ENCODE measurements at regions of chr11 and their contacts with region 1.

Region 1: DNA sequence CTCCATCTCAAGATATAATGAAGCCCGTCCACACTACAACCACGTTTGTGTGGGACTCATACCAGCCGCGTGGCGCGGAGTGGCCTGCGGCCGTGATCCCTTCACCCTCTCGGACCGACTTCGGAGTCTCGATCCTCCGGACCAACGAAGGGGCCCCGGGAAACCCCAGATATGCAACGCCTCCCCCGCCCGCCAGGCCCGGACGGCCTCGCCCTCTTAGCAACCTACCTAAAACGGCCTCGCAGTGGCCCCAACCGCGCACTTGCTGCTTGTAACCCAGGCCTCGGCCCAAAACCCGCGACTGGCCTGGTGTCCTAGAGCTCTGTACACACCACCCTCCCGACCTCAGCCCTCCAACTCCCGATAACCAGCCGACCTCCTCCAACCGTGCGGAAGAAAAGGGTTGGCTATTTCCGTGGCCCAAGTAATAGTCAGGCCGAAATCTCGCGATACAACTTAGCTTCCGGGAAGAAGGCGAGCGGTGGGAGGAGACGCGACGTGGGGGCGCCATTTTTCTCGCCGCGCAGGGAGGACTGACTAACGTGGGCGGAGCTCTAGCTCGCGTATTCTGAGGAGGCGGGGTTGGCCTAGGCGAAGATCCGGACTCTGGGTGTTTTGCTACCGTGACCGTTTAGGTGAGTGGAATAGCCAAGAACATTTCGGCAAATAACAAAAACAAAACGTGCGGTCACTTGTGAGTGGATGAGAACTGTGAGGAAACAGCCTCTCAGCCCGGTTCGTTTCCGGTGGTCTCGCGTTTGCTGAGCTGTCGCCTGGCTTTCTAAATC is at the starts of genes C11orf54 and TAF1D:
- DNase-seq: peak; percentile 96
- H3K4me3 Mint-ChIP-seq: peak within 1 kb of the TSS; percentile 99
- H3K27ac Mint-ChIP-seq: peak within 1 kb of the TSS; percentile 99
- H3K4me1 Mint-ChIP-seq: peaks cover 45% of the 10 kb centered on the region
- H3K27me3 Mint-ChIP-seq: no peaks in the 10 kb centered on the region
- total RNA-seq, gene C11orf54: 19.3 and 21.2 TPM in 2 replicates
- total RNA-seq, gene TAF1D: 344 TPM in 2 replicates

Region 2: DNA sequence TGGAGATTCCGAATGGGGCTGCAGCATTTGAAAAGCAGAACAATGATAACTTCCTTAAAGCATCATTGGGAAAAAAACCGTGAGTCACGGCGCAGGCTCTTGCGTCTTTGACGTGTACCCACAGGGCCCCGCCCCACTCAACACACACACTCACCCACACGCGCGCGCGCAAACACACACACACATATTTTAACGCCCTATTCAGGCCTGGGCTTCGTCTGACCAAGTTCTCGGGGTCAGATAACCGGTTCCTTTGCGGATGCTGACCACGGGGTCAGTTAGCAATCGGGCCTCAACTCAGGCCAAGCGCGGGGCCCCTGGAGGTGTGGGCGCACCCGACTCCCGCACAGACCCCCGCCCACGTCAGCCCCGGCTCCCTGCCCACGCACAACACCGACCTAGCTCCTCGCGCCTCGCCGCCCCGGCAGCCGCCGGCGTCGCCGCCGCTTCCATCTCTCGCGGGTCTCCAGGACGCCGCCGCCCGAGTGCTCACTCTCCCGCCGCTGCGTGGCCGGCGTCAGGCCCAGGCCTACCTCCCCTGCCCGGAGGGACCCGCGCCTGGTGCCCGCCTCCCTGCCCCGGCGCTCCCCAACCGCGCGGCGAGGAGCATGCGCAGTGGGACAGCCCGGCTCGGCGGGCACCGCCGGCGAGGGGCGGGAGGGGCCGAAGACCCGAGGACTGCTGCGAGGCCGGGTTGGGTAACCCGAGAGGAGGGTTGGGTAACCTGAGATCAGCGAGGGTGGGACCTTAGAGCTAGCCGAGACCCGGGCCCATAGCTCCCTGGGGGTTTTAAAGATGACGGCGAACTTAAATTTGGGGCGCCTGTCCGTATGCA is 543.7 kb before region 1 on chr11 and contains the start of gene SLC36A4:
- intact Hi-C with region 1: loop called (anchors 1 kb)
- DNase-seq: peak; percentile 83
- H3K4me3 Mint-ChIP-seq: peak within 1 kb of the TSS; percentile 88
- H3K27ac Mint-ChIP-seq: peak within 1 kb of the TSS; percentile 92
- H3K4me1 Mint-ChIP-seq: peaks cover 21% of the 10 kb centered on the region
- H3K27me3 Mint-ChIP-seq: peaks cover 15% of the 10 kb centered on the region
- total RNA-seq, gene SLC36A4: 18.9 and 19.8 TPM in 2 replicates

Region 3: DNA sequence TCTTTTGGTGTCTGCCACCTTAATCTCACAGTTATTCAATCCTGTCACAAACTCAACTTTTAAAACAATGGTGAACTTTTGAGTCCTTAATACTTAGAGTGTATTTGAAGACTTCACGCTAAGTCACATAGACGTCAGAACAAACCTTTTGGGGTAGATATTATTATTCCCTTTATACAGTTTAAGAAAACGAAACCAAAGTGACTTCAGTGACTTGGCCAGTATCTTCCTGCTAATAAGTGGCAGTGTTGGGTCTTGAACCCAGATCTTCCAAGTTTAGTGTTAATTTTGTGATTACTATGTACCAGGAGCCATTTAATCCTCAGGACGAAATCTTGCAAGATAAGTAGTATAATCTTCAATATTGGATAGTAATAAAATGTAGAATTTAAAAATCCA is 79.1 kb before region 1 on chr11:
- intact Hi-C with region 1: loop called (anchors 1 kb)
- DNase-seq: no peak
- H3K4me3 Mint-ChIP-seq: peak overlapping the region; percentile 95
- H3K27ac Mint-ChIP-seq: peak overlapping the region; percentile 93
- H3K4me1 Mint-ChIP-seq: peaks cover 43% of the 10 kb centered on the region
- H3K27me3 Mint-ChIP-seq: no peaks in the 10 kb centered on the region

Region 4: GRCh38 chr11:93727985-93728791 is 13.1 kb before region 1 on chr11:
- intact Hi-C with region 1: loop called (anchors 1 kb)
- DNase-seq: no peak
- H3K4me3 Mint-ChIP-seq: no peak overlapping the region
- H3K27ac Mint-ChIP-seq: peak overlapping the region; percentile 75
- H3K4me1 Mint-ChIP-seq: peaks cover 10% of the 10 kb centered on the region
- H3K27me3 Mint-ChIP-seq: no peaks in the 10 kb centered on the region

Region 5: DNA sequence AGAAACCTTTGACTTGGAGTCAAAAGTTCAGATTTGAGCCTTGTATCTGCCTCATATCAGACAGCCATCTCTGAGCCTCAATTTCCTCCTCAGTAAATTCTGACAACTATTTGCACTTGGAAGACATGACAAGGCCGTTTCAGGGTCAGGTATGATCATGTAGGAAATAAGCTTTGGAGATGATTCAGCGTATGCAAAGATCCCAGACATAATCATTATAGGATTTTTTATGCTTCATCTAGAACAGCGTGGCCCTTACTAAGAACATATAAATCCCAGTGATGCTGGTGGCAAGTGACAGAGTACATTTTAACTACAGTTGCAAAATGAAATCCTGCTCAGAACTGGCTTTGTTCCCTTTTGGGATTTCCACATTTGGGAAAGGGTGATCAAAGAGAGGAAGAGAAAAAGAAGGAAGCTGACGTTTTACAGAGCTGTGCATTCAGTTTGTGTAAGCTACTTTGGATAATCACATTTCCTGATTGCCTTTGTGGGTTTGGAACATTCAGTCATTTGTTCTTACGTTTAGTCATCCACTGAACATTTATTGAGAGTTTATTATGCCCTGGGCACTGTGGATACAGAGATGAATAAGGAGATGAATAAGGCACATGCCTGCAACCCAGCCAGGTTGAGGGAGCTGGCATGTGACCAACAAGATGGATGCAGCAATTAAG is 197.9 kb after region 1 on chr11:
- intact Hi-C with region 1: no loop called
- DNase-seq: no peak
- H3K4me3 Mint-ChIP-seq: no peak overlapping the region
- H3K27ac Mint-ChIP-seq: no peak overlapping the region
- H3K4me1 Mint-ChIP-seq: no peaks in the 10 kb centered on the region
- H3K27me3 Mint-ChIP-seq: no peaks in the 10 kb centered on the region

Region 6: GRCh38 chr11:94128746-94129511 is 387.6 kb after region 1 on chr11 and contains the start of gene PANX1:
- intact Hi-C with region 1: loop called (anchors 2 kb)
- DNase-seq: peak; percentile 71
- H3K4me3 Mint-ChIP-seq: peak within 1 kb of the TSS; percentile 87
- H3K27ac Mint-ChIP-seq: peak within 1 kb of the TSS; percentile 84
- H3K4me1 Mint-ChIP-seq: peaks cover 24% of the 10 kb centered on the region
- H3K27me3 Mint-ChIP-seq: no peaks in the 10 kb centered on the region
- total RNA-seq, gene PANX1: 18.1 and 20.0 TPM in 2 replicates

Region 7: DNA sequence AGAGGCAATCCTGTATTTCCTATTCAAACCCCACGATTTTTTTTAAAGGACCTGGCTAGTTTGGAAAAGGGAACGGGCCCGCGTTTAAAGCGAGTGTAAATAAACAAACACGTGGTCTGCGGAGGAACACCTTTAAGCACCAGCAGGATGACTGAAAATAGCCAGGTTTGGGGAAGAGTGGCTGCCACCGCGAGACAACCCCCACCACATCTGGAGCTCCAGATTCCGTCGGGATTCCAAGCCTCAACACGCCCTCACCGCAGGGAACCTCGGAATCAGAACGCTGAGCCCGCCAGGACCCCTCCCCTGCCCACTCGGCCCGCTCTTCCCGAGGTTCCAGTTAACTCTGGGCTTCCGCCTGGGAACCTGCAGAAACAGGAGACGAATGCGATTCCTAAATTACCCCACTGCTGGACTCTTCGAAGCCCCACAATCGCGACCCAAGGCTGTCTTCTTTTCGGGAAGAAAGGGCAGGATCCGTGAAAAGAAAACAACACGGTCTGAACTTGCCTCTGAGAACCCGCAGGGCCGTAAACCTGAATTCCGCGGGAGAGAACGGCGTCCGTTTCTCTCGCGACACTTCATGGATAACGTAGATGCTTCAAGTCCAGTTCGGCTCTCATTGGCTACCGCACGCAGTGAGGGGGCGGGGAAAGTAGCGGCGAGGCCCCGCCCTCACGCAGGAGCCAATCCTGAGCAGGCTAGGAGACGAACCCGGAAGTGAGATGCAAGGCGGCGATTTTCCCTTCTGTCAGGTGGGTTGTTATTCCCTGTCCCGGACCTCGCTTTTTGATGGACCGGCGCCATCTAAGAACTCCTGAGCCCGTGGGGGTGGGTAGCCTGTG is 752.2 kb after region 1 on chr11 and contains the starts of genes ANKRD49 and MRE11:
- intact Hi-C with region 1: loop called (anchors 2 kb)
- DNase-seq: peak; percentile 96
- H3K4me3 Mint-ChIP-seq: peak within 1 kb of the TSS; percentile 94
- H3K27ac Mint-ChIP-seq: peak within 1 kb of the TSS; percentile 92
- H3K4me1 Mint-ChIP-seq: peaks cover 23% of the 10 kb centered on the region
- H3K27me3 Mint-ChIP-seq: no peaks in the 10 kb centered on the region
- total RNA-seq, gene ANKRD49: 19.4 and 20.7 TPM in 2 replicates
- total RNA-seq, gene MRE11: 45.8 and 47.4 TPM in 2 replicates

Region 8: DNA sequence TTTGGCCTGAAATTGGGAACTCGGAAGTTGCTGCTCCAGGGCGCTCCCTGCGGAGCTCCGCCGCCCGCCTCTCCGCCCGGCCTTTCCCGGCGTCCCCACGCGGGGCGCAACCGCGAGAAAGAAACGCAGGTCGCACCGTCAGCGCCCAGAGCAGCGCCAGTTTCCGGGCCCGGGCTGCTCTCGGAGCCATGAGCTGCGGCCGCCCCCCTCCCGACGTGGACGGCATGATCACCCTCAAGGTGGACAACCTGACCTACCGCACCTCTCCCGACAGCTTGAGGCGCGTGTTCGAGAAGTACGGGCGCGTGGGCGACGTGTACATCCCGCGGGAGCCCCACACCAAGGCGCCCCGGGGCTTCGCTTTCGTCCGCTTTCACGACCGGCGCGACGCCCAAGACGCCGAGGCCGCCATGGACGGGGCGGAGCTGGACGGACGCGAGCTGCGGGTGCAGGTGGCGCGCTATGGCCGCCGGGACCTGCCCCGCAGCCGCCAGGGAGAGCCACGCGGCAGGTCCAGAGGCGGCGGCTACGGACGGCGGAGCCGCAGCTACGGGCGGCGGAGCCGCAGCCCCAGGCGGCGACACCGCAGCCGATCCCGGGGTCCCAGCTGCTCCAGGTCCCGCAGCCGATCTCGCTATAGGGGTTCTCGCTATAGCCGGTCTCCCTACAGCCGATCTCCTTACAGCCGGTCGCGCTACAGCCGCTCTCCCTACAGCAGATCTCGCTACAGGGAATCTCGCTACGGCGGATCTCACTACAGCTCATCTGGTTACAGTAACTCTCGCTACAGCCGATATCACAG is 1326.0 kb after region 1 on chr11:
- intact Hi-C with region 1: loop called (anchors 5 kb)
- DNase-seq: peak; percentile 70
- H3K4me3 Mint-ChIP-seq: peak overlapping the region; percentile 91
- H3K27ac Mint-ChIP-seq: peak overlapping the region; percentile 93
- H3K4me1 Mint-ChIP-seq: peaks cover 18% of the 10 kb centered on the region
- H3K27me3 Mint-ChIP-seq: peaks cover 16% of the 10 kb centered on the region